ENCODE measurements at regions of chr19 and their contacts with region 1.

Region 1: DNA sequence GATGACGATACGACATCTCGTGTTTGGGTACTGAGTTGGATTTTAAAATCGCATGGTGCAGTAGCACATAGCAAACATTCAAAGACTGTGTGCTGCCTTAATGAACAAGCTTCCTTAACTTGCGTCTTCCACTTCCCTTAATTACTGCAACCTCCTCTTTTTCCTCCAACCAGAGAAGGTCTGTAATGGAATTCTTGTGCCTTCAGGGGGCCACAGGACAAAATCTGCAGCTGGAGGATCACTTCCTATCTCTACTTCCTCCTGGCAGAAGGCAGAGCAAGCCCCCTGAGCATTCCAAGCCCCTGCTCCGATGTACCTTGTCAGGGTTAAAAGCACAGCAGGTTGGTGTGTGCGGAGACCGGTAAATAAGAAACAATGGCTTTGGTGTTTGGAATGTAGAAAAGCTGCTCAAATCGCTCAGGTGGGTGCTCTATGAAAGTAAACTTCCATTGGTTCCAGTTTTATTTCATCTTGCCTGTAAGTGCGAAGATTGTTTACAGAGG is 151.3 kb upstream of the UQCRFS1 start:
- DNase-seq: no peak
- ATAC-seq: no peak
- H3K4me3 ChIP-seq: no peak overlapping the region
- H3K27ac ChIP-seq: no peak overlapping the region
- H3K4me1 ChIP-seq: no peaks in the 10 kb centered on the region
- H3K27me3 ChIP-seq: peaks cover 0 to 47% (median 16%) of the 10 kb centered on the region in 7 donors
- CTCF ChIP-seq: no peak

Region 2: GRCh38 chr19:29323440-29324290 is 40.6 kb before region 1 on chr19:
- intact Hi-C with region 1: loop called in 1 of 10 experiments (anchors 2 kb)
- DNase-seq: no peak
- ATAC-seq: no peak
- H3K4me3 ChIP-seq: no peak overlapping the region
- H3K27ac ChIP-seq: no peak overlapping the region
- H3K4me1 ChIP-seq: no peaks in the 10 kb centered on the region
- H3K27me3 ChIP-seq: peaks cover 0 to 22% (median 12%) of the 10 kb centered on the region in 7 donors
- CTCF ChIP-seq: no peak

Measured in heart right ventricle (tissue), 16 donors.